SK-N-SH (cell line): ENCODE measurements at regions of chr19 and their contacts with region 1.

Region 1: GRCh38 chr19:2315818-2316353 is 7.9 kb upstream of the LINGO3 start:
- DNase-seq: peak; percentile 95
- H3K4me3 ChIP-seq: no peak overlapping the region; a peak in 1 of 4 replicates
- H3K27ac ChIP-seq: no peak overlapping the region; a peak in 1 of 4 replicates
- H3K4me1 ChIP-seq: peaks cover 0 to 2% of the 10 kb centered on the region in 2 experiments; a peak in 1 of 4 replicates
- H3K27me3 ChIP-seq: no peaks in the 10 kb centered on the region
- CTCF ChIP-seq: peak; percentile 80
- EP300 ChIP-seq: no peak
- RAD21 ChIP-seq: peak; percentile 98

Region 2: DNA sequence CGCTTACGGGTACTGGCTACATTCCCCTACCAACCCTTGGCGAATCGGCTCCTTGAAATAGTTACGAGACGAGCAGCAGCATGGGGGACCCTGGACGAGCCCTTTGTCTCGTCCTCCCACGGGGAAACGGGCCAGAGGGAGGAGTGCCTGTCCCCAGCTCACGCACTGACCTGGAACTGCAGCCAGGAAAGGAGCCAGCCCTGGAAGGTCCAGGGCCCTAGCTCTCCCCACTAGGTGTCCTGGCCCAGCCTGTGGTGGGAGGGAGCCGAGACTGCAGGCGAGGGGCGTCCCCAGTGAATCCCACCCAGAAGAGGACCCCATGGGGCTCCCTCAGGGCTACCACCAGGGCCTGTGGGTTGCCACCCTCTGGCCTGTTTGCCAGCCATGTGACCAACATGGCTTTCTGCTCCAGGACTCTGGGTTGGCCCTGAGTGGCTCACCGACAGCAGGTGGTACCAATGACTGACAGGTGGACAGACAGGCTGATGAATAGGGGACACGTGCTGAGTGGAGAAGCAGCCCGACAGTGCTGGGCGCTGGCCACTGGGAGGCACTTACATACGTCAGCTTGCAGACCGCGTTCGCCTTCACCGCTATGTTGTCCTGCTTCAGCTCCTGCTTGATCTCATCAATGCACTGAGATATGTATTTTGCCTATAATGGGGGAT is 177.7 kb before region 1 on chr19:
- CTCF ChIA-PET with region 1: no interaction called
- POLR2A ChIA-PET with region 1: no interaction called
- DNase-seq: no peak
- H3K4me3 ChIP-seq: no peak overlapping the region
- H3K27ac ChIP-seq: no peak overlapping the region
- H3K4me1 ChIP-seq: no peaks in the 10 kb centered on the region
- H3K27me3 ChIP-seq: no peaks in the 10 kb centered on the region
- CTCF ChIP-seq: no peak
- EP300 ChIP-seq: no peak
- RAD21 ChIP-seq: no peak

Region 3: GRCh38 chr19:2176337-2176994 is 139.4 kb before region 1 on chr19:
- CTCF ChIA-PET with region 1: interaction called, 10 read pairs
- POLR2A ChIA-PET with region 1: no interaction called
- DNase-seq: no peak
- H3K4me3 ChIP-seq: no peak overlapping the region
- H3K27ac ChIP-seq: no peak overlapping the region; a peak in 1 of 4 replicates
- H3K4me1 ChIP-seq: peaks cover 1 to 16% of the 10 kb centered on the region in 2 experiments; a peak in 2 of 4 replicates
- H3K27me3 ChIP-seq: no peaks in the 10 kb centered on the region
- CTCF ChIP-seq: no peak
- EP300 ChIP-seq: no peak
- RAD21 ChIP-seq: no peak

Region 4: GRCh38 chr19:2236314-2237050 is 79.4 kb before region 1 on chr19 and contains the starts of genes PLEKHJ1 and SF3A2:
- CTCF ChIA-PET with region 1: interaction called, 107 read pairs
- POLR2A ChIA-PET with region 1: interaction called, 3 read pairs
- DNase-seq: peak; percentile 99
- H3K4me3 ChIP-seq: peak within 1 kb of the TSS; percentile 76 to 89
- H3K27ac ChIP-seq: peak within 1 kb of the TSS; percentile 93 to 96
- H3K4me1 ChIP-seq: peaks cover 21 to 46% of the 10 kb centered on the region in 2 experiments; a peak in 3 of 4 replicates
- H3K27me3 ChIP-seq: no peaks in the 10 kb centered on the region
- CTCF ChIP-seq: peak; percentile 97
- EP300 ChIP-seq: no peak
- RAD21 ChIP-seq: peak; percentile 96
- polyA plus RNA-seq, gene PLEKHJ1: 128 and 151 TPM in 2 replicates
- polyA plus RNA-seq, gene SF3A2: 35.0 and 55.8 TPM in 2 replicates

Region 5: GRCh38 chr19:2261438-2262172 is 54.3 kb before region 1 on chr19:
- CTCF ChIA-PET with region 1: interaction called, 11 read pairs
- POLR2A ChIA-PET with region 1: no interaction called
- DNase-seq: peak; percentile 49
- H3K4me3 ChIP-seq: no peak overlapping the region; a peak in 1 of 4 replicates
- H3K27ac ChIP-seq: no peak overlapping the region
- H3K4me1 ChIP-seq: peaks cover 0 to 3% of the 10 kb centered on the region in 2 experiments; a peak in 1 of 4 replicates
- H3K27me3 ChIP-seq: no peaks in the 10 kb centered on the region
- CTCF ChIP-seq: peak; percentile 67
- EP300 ChIP-seq: no peak
- RAD21 ChIP-seq: peak; percentile 56

Region 6: DNA sequence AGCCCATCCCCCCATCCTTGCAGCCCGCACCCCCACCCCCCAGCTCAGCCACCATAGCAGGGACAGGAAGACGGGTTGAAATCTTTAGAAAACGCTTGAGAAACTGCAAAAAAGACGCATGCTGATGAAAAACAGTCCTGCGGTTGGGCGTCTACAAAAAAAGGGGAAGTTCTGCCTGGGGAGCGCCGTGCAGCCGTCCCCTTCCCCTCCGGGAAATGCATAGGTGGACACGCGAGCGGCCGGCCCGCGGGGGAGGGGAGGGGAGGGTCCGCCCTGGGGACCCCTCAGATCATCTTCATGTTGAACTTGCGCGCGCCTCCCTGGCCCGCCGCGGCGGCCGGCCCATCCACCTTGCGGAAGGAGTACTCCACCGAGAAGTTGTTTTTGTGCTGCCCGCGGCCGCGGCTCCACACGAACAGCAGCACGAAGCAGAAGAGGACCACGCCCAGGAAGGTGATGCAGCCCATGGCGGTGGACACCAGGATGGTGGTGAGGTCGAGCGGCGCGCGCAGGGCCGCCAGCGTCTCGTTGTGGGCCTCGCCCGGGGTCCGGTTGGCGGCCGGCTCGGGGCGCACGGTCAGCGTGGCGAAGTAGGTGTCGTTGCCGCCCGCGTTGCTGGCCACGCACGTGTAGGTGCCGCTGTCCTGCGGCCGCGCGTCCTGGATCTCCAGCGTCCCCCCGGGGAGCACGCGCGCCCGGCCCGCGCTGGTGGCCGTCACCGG is 26.0 kb before region 1 on chr19:
- CTCF ChIA-PET with region 1: interaction called, 53 read pairs
- POLR2A ChIA-PET with region 1: no interaction called
- DNase-seq: no peak
- H3K4me3 ChIP-seq: no peak overlapping the region
- H3K27ac ChIP-seq: no peak overlapping the region
- H3K4me1 ChIP-seq: peaks cover under 1 to 16% of the 10 kb centered on the region in 2 experiments; a peak in 1 of 4 replicates
- H3K27me3 ChIP-seq: peaks cover 37% of the 10 kb centered on the region
- CTCF ChIP-seq: no peak
- EP300 ChIP-seq: no peak
- RAD21 ChIP-seq: no peak

Region 7: GRCh38 chr19:2337329-2338043 is 21.6 kb after region 1 on chr19:
- CTCF ChIA-PET with region 1: interaction called, 12 read pairs
- POLR2A ChIA-PET with region 1: interaction called, 3 read pairs
- DNase-seq: peak; percentile 69
- H3K4me3 ChIP-seq: no peak overlapping the region
- H3K27ac ChIP-seq: no peak overlapping the region
- H3K4me1 ChIP-seq: no peaks in the 10 kb centered on the region
- H3K27me3 ChIP-seq: no peaks in the 10 kb centered on the region
- CTCF ChIP-seq: no peak; the same call in 1 of the 2 replicates
- EP300 ChIP-seq: no peak
- RAD21 ChIP-seq: no peak

Region 8: GRCh38 chr19:2428756-2429711 is 113.1 kb after region 1 on chr19:
- CTCF ChIA-PET with region 1: no interaction called
- POLR2A ChIA-PET with region 1: no interaction called
- DNase-seq: no peak
- H3K4me3 ChIP-seq: no peak overlapping the region
- H3K27ac ChIP-seq: peak overlapping the region in 1 of 2 experiments; percentile 96; a peak in 1 of 4 replicates
- H3K4me1 ChIP-seq: peaks cover 17 to 22% of the 10 kb centered on the region in 2 experiments; a peak in 2 of 4 replicates
- H3K27me3 ChIP-seq: no peaks in the 10 kb centered on the region
- CTCF ChIP-seq: no peak
- EP300 ChIP-seq: no peak
- RAD21 ChIP-seq: no peak